Activated CD8-positive, alpha-beta T cell treated with anti-CD3 and anti-CD28 coated beads, Interleukin-2, amount 10 ng/mL, durations not matched to agents 7 days and 5 days (primary cell): ENCODE measurements at regions of chr9 and their contacts with region 1.

Region 1: GRCh38 chr9:114681594-114682332 is at the start of gene TEX48:
- DNase-seq: peak; percentile 94
- ATAC-seq: peak; percentile 94
- H3K4me3 Mint-ChIP-seq: peak within 1 kb of the TSS; percentile 7
- H3K27ac Mint-ChIP-seq: peak within 1 kb of the TSS; percentile 85
- H3K4me1 Mint-ChIP-seq: peaks cover 71% of the 10 kb centered on the region
- H3K27me3 Mint-ChIP-seq: no peaks in the 10 kb centered on the region
- total RNA-seq, gene TEX48: 0.61 to 1.7 TPM

Region 2: DNA sequence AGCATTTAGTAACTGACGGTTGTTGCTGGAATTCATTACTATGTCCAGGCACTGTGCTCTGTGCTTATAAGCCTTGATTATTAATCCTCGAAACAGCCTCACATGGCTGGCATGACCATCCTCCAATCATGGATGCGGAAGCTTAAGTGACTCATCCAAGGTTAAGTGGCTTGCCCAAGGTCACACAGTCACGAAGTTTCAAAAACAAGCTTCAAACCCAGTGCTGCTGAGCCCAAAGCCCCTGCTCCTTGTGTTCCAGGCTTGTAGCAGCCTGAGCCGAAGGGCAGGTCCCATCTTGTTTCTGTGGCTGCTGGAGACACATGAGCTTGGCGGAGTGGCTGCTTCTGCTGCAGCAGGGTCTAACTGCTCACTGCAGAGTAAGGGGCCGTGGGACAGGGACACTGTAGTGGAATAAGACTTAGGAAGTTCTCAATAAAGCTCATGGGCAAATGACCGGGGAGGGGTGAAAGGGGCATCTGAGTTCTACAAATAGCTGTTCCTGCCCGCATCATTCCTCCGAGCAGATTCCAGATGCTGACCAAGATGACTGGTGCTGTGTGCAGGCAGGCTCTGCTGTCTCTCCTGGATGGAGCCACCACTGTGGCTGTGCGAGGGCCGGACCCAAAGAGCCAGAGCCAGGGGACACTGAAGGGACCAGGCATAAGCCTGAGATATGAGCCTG is 208.9 kb before region 1 on chr9:
- CTCF ChIA-PET with region 1: no interaction called
- POLR2A ChIA-PET with region 1: no interaction called
- DNase-seq: no peak
- ATAC-seq: no peak
- H3K4me3 Mint-ChIP-seq: no peak overlapping the region
- H3K27ac Mint-ChIP-seq: no peak overlapping the region
- H3K4me1 Mint-ChIP-seq: peaks cover 23% of the 10 kb centered on the region
- H3K27me3 Mint-ChIP-seq: no peaks in the 10 kb centered on the region

Region 3: GRCh38 chr9:114559830-114560513 is 121.8 kb before region 1 on chr9:
- CTCF ChIA-PET with region 1: no interaction called
- POLR2A ChIA-PET with region 1: no interaction called
- DNase-seq: no peak
- ATAC-seq: no peak
- H3K4me3 Mint-ChIP-seq: no peak overlapping the region
- H3K27ac Mint-ChIP-seq: no peak overlapping the region
- H3K4me1 Mint-ChIP-seq: no peaks in the 10 kb centered on the region
- H3K27me3 Mint-ChIP-seq: peaks cover 18% of the 10 kb centered on the region

Region 4: DNA sequence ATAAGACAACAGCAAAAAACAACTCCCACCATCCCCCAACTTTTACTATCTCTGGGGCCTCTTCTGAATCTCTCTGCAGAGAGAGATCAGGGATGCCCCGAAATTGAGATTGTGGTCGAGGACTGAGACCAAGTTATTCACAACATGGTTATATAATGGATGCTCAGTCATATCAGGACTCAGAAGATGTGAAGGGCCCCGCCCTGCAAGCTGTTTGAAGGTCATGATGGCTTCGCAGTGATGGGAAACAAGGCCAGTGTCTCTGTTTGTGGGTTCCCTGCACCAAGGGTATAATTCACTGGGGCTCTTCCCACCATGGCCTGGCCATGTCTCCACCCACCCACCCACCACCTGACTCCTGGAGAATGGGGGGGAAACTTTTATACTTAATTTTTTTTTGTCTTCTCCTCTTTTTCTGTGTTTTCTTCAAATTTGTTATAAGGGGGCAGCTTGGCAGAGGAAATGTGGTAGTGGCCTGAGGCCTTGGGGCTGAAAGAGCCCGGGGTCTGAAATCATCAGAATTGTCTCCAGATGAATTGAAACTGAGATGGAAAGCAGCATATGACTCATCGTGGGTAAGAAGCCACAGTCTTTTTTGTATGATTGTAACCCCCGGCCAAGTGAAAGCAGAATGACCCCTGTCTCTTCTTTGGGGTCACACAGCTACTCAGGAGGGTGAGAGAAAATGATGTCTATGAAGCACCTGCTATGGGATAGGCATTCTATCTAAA is 15.2 kb after region 1 on chr9:
- CTCF ChIA-PET with region 1: interaction called, 53 read pairs
- POLR2A ChIA-PET with region 1: interaction called, 7 read pairs
- DNase-seq: peak; percentile 89
- ATAC-seq: peak; percentile 76
- H3K4me3 Mint-ChIP-seq: peak overlapping the region; percentile 52
- H3K27ac Mint-ChIP-seq: peak overlapping the region; percentile 98
- H3K4me1 Mint-ChIP-seq: peaks cover 94% of the 10 kb centered on the region
- H3K27me3 Mint-ChIP-seq: no peaks in the 10 kb centered on the region

Region 5: GRCh38 chr9:114738581-114739316 is 57.0 kb after region 1 on chr9:
- CTCF ChIA-PET with region 1: interaction called, 224 read pairs
- POLR2A ChIA-PET with region 1: no interaction called
- DNase-seq: peak; percentile 84
- ATAC-seq: peak; percentile 81
- H3K4me3 Mint-ChIP-seq: no peak overlapping the region
- H3K27ac Mint-ChIP-seq: peak overlapping the region; percentile 86
- H3K4me1 Mint-ChIP-seq: peaks cover 70% of the 10 kb centered on the region
- H3K27me3 Mint-ChIP-seq: no peaks in the 10 kb centered on the region

Region 6: DNA sequence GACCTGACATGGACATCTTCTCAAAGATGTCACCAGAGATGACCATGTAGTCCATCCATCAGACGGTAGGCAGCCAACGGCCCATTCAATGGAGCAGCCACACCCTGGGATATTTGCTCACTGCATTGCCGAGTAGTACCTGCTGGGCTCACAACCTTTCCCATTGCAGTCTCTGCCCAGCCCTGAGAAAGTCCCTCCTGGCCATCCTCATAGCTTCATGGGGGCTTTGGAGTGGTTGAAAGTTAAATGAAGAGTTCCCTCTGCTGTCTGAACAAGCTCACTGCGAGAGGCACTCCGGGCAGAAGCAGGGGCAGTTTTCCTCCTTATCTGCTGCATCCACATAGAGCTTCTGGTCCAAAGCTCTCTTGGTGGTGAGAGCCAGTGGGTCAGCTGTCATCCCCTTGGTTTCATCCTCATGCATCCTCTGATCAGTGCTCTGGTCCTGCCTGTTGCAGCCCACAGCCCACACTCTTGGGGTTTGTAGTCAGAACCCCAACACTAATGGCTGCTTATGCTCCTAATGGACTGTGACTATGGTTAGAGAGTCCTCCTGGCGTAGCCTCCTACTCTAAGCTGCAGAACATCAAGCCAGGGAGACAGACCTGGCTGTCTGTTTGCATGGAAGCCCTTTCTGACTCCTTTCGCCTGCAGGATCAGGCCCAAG is 225.3 kb after region 1 on chr9:
- CTCF ChIA-PET with region 1: interaction called, 243 read pairs
- POLR2A ChIA-PET with region 1: interaction called, 5 read pairs
- DNase-seq: peak; percentile 57
- ATAC-seq: peak; percentile 11
- H3K4me3 Mint-ChIP-seq: peak overlapping the region; percentile 62
- H3K27ac Mint-ChIP-seq: peak overlapping the region; percentile 90
- H3K4me1 Mint-ChIP-seq: peaks cover 56% of the 10 kb centered on the region
- H3K27me3 Mint-ChIP-seq: no peaks in the 10 kb centered on the region

Region 7: DNA sequence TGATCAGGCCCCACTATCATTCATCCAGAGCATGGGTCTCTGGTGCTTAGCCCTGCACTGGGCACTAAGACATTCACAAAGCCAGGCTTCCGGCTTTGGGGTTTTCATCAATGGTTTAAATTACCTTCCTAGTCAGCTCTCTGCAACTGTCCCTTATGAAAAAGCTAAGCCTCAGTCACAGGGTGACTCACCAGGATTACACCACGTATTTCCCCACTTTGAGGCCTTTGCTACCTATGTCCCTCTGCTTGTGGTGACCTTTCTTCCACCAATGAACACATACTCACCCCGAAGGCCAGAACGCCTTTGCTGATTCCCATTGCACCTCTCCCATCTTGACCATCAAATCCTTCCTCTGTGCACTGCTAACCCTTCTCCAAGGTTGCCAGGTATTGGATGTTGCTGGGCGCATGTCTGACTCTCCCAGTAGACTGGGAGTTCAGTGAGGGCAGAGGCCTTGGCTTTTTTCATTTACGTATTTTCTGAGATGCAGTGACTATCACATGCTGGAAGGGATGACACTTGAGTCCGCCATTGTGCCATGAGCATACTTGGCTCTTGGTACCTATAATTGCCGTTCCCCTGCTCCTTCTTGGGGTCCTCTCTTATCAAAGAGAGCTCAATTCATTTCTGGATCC is 307.3 kb after region 1 on chr9:
- CTCF ChIA-PET with region 1: interaction called, 13 read pairs
- POLR2A ChIA-PET with region 1: no interaction called
- DNase-seq: peak; percentile 26
- ATAC-seq: peak; percentile 7
- H3K4me3 Mint-ChIP-seq: no peak overlapping the region
- H3K27ac Mint-ChIP-seq: peak overlapping the region; percentile 79
- H3K4me1 Mint-ChIP-seq: peaks cover 43% of the 10 kb centered on the region
- H3K27me3 Mint-ChIP-seq: no peaks in the 10 kb centered on the region